CD8-positive, alpha-beta memory T cell (primary cell): ENCODE measurements at regions of chr6 and their contacts with region 1.

Region 1: DNA sequence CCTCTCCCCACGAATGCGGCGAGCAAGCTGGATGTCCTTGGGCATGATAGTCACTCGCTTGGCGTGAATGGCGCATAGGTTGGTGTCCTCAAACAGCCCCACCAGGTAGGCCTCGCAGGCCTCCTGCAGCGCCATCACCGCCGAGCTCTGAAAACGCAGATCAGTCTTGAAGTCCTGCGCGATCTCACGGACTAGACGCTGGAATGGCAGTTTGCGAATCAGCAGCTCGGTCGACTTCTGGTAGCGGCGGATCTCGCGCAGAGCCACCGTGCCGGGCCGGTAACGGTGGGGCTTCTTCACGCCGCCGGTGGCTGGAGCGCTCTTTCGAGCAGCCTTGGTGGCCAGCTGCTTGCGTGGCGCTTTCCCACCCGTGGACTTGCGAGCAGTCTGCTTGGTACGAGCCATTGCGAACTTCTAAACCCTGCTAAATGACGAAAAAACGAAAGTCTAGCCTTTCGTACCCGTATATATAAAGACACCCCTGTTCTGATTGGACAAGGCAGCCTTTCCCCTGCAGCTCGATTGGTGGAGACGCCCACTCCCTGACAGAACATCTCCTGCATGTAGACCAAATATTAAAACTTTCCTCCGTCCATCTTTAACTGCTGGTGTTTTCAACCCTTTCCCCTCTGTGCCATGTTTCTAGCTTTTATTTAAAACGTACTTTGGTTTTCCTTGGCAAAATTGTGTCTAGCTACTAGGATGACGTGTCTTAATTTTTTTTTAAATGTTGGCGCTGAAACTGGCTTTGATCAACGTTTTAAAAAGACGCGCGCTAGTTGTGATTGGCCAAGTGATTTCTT is 109.8 kb downstream of the HFE start:
- DNase-seq: peak; percentile 66 to 93 (median 90)
- H3K4me3 ChIP-seq: peak overlapping the region; percentile 84
- H3K4me3 Mint-ChIP-seq: peak overlapping the region; percentile 95 to 99 (median 96)
- H3K27ac ChIP-seq: peak overlapping the region; percentile 95
- H3K27ac Mint-ChIP-seq: peak overlapping the region; percentile 95 to 100 (median 98)
- H3K4me1 ChIP-seq: peaks cover 17% of the 10 kb centered on the region
- H3K4me1 Mint-ChIP-seq: peaks cover 33 to 63% (median 59%) of the 10 kb centered on the region in 3 donors
- H3K27me3 ChIP-seq: no peaks in the 10 kb centered on the region
- H3K27me3 Mint-ChIP-seq: peaks cover 0 to 4% of the 10 kb centered on the region in 2 donors

Region 2: GRCh38 chr6:26031595-26032339 is 165.3 kb before region 1 on chr6:
- CTCF ChIA-PET with region 1: interaction called, 4 read pairs
- POLR2A ChIA-PET with region 1: interaction called, 13 read pairs
- DNase-seq: peak; percentile 75 to 91 (median 86)
- H3K4me3 ChIP-seq: peak overlapping the region; percentile 70
- H3K4me3 Mint-ChIP-seq: peak overlapping the region; percentile 89 to 97 (median 95)
- H3K27ac ChIP-seq: peak overlapping the region; percentile 85
- H3K27ac Mint-ChIP-seq: peak overlapping the region; percentile 96 to 99 (median 98)
- H3K4me1 ChIP-seq: peaks cover 30% of the 10 kb centered on the region
- H3K4me1 Mint-ChIP-seq: peaks cover 47 to 69% (median 53%) of the 10 kb centered on the region in 3 donors
- H3K27me3 ChIP-seq: no peaks in the 10 kb centered on the region
- H3K27me3 Mint-ChIP-seq: peaks cover 0 to 6% of the 10 kb centered on the region in 2 donors

Region 3: DNA sequence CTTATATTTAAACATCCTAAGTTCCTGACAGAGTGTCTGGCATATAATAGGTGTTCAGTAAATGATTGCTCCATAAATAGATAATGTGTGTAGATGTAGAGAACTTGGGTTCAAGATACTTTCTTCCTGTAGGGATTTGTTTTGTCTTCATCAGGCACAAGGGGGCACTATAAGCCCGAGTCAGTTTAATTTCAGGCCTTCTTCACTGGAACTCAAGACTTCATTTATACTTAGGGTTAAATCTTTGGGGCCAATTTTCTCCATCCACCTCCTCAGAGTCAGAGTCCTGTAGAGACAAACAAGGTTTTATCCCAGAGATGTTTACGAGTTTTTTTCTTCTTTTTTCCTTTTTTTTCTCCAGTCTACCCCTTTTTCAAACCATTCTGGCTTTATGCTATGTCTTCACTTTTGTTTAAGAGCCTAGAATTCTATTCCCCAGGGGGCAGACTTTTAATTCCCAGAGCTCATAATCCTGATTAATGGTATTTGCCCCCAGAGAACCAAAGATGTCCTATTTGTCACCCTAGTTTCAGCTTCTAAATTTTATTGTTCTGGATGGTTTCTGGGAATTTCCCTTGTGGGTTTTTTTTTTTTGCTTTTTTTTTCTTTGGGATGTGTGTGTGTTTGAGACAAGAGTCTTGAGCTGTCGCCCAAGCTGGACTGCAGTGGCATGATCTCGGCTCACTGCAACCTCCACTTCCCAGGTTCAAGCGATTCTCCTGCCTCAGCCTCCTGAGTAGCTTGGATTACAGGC is 21.4 kb before region 1 on chr6:
- CTCF ChIA-PET with region 1: interaction called, 25 read pairs
- POLR2A ChIA-PET with region 1: interaction called, 109 read pairs
- DNase-seq: peak; percentile 8 to 63 (median 52)
- H3K4me3 ChIP-seq: no peak overlapping the region
- H3K4me3 Mint-ChIP-seq: peak overlapping the region in 2 of 7 donors; percentile 21 to 75
- H3K27ac ChIP-seq: no peak overlapping the region
- H3K27ac Mint-ChIP-seq: peak overlapping the region; percentile 8 to 89 (median 78)
- H3K4me1 ChIP-seq: peaks cover 36% of the 10 kb centered on the region
- H3K4me1 Mint-ChIP-seq: peaks cover 30 to 44% (median 40%) of the 10 kb centered on the region in 3 donors
- H3K27me3 ChIP-seq: no peaks in the 10 kb centered on the region
- H3K27me3 Mint-ChIP-seq: peaks cover 0 to 3% of the 10 kb centered on the region in 2 donors

Region 4: GRCh38 chr6:26234421-26235296 is 37.6 kb after region 1 on chr6:
- CTCF ChIA-PET with region 1: interaction called, 51 read pairs
- POLR2A ChIA-PET with region 1: interaction called, 192 read pairs
- DNase-seq: peak; percentile 38 to 84 (median 76)
- H3K4me3 ChIP-seq: peak overlapping the region; percentile 94
- H3K4me3 Mint-ChIP-seq: peak overlapping the region; percentile 87 to 95 (median 91)
- H3K27ac ChIP-seq: peak overlapping the region; percentile 88
- H3K27ac Mint-ChIP-seq: peak overlapping the region; percentile 87 to 98 (median 96)
- H3K4me1 ChIP-seq: peaks cover 19% of the 10 kb centered on the region
- H3K4me1 Mint-ChIP-seq: peaks cover 28 to 35% (median 35%) of the 10 kb centered on the region in 3 donors
- H3K27me3 ChIP-seq: no peaks in the 10 kb centered on the region
- H3K27me3 Mint-ChIP-seq: peaks cover 0 to 5% of the 10 kb centered on the region in 2 donors

Region 5: GRCh38 chr6:26285143-26286134 is 88.4 kb after region 1 on chr6:
- CTCF ChIA-PET with region 1: interaction called, 11 read pairs
- POLR2A ChIA-PET with region 1: interaction called, 82 read pairs
- DNase-seq: peak; percentile 89 to 98 (median 91)
- H3K4me3 ChIP-seq: peak overlapping the region; percentile 75
- H3K4me3 Mint-ChIP-seq: peak overlapping the region; percentile 83 to 97 (median 89)
- H3K27ac ChIP-seq: peak overlapping the region; percentile 97
- H3K27ac Mint-ChIP-seq: peak overlapping the region; percentile 93 to 98 (median 98)
- H3K4me1 ChIP-seq: peaks cover 15% of the 10 kb centered on the region
- H3K4me1 Mint-ChIP-seq: peaks cover 22 to 29% (median 23%) of the 10 kb centered on the region in 3 donors
- H3K27me3 ChIP-seq: no peaks in the 10 kb centered on the region
- H3K27me3 Mint-ChIP-seq: peaks cover 0 to 20% of the 10 kb centered on the region in 2 donors

Region 6: GRCh38 chr6:26322645-26323482 is 125.8 kb after region 1 on chr6:
- CTCF ChIA-PET with region 1: no interaction called
- POLR2A ChIA-PET with region 1: no interaction called
- DNase-seq: peak in 4 of 5 donors; percentile 38 to 79 (median 70)
- H3K4me3 ChIP-seq: peak overlapping the region; percentile 62
- H3K4me3 Mint-ChIP-seq: peak overlapping the region; percentile 72 to 93 (median 87)
- H3K27ac ChIP-seq: peak overlapping the region; percentile 69
- H3K27ac Mint-ChIP-seq: peak overlapping the region; percentile 80 to 94 (median 85)
- H3K4me1 ChIP-seq: no peaks in the 10 kb centered on the region
- H3K4me1 Mint-ChIP-seq: peaks cover 24 to 37% (median 28%) of the 10 kb centered on the region in 3 donors
- H3K27me3 ChIP-seq: no peaks in the 10 kb centered on the region
- H3K27me3 Mint-ChIP-seq: peaks cover 5 to 19% of the 10 kb centered on the region in 2 donors

Region 7: DNA sequence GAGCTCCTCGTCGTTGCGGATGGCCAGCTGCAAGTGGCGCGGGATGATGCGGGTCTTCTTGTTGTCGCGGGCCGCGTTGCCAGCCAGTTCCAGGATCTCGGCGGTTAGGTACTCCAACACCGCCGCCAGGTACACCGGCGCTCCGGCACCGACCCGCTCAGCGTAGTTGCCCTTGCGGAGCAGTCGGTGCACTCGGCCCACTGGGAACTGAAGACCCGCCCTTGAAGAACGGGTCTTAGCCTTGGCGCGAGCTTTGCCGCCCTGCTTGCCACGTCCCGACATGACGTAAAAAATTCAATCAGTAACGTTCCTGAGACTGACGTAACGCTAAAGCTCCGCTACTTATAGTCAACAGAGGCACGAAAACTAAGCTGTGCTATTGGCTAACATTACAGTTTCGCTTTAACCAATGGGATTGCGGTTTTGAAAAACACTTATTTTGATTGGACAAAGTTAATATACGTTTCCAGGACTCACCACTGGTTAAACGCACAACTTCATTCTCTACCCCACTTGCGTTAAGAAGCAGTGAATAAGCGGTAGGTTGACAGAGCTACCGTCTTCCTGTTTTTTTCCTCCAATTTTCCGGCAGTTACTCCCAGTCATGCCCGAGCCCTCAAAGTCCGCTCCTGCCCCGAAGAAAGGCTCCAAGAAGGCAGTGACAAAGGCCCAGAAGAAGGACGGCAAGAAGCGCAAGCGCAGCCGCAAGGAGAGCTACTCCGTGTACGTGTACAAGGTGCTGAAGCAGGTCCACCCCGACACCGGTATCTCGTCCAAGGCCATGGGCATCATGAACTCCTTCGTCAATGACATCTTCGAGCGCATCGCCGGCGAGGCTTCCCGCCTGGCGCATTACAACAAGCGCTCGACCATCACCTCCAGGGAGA is 1641.3 kb after region 1 on chr6:
- CTCF ChIA-PET with region 1: no interaction called
- POLR2A ChIA-PET with region 1: interaction called, 17 read pairs
- DNase-seq: peak; percentile 67 to 93 (median 92)
- H3K4me3 ChIP-seq: peak overlapping the region; percentile 71
- H3K4me3 Mint-ChIP-seq: no peak overlapping the region
- H3K27ac ChIP-seq: peak overlapping the region; percentile 99
- H3K27ac Mint-ChIP-seq: no peak overlapping the region
- H3K4me1 ChIP-seq: peaks cover 30% of the 10 kb centered on the region
- H3K4me1 Mint-ChIP-seq: peaks cover 12 to 23% (median 19%) of the 10 kb centered on the region in 3 donors
- H3K27me3 ChIP-seq: no peaks in the 10 kb centered on the region
- H3K27me3 Mint-ChIP-seq: peaks cover 5 to 13% of the 10 kb centered on the region in 2 donors